MCF 10A (cell line): ENCODE measurements at regions of chr16 and their contacts with region 1.

Region 1: GRCh38 chr16:15757630-15758251 is 99.1 kb downstream of the MYH11 start:
- DNase-seq: no peak
- H3K4me3 Mint-ChIP-seq: no peak overlapping the region
- H3K27ac Mint-ChIP-seq: no peak overlapping the region
- H3K4me1 Mint-ChIP-seq: no peaks in the 10 kb centered on the region
- H3K27me3 Mint-ChIP-seq: peaks cover 27% of the 10 kb centered on the region
- CTCF ChIP-seq: no peak

Region 2: GRCh38 chr16:15427648-15428239 is 330.0 kb before region 1 on chr16:
- CTCF ChIA-PET with region 1: no interaction called
- POLR2A ChIA-PET with region 1: no interaction called
- intact Hi-C with region 1: loop called (anchors 5 kb)
- DNase-seq: peak; percentile 75
- H3K4me3 Mint-ChIP-seq: no peak overlapping the region
- H3K27ac Mint-ChIP-seq: no peak overlapping the region
- H3K4me1 Mint-ChIP-seq: no peaks in the 10 kb centered on the region
- H3K27me3 Mint-ChIP-seq: no peaks in the 10 kb centered on the region
- CTCF ChIP-seq: peak; percentile 49

Region 3: GRCh38 chr16:15672514-15673167 is 85.1 kb before region 1 on chr16:
- CTCF ChIA-PET with region 1: no interaction called
- POLR2A ChIA-PET with region 1: no interaction called
- intact Hi-C with region 1: no loop called
- DNase-seq: peak; percentile 99
- H3K4me3 Mint-ChIP-seq: peak overlapping the region; percentile 63
- H3K27ac Mint-ChIP-seq: peak overlapping the region; percentile 99
- H3K4me1 Mint-ChIP-seq: peaks cover 30% of the 10 kb centered on the region
- H3K27me3 Mint-ChIP-seq: no peaks in the 10 kb centered on the region
- CTCF ChIP-seq: no peak

Region 4: DNA sequence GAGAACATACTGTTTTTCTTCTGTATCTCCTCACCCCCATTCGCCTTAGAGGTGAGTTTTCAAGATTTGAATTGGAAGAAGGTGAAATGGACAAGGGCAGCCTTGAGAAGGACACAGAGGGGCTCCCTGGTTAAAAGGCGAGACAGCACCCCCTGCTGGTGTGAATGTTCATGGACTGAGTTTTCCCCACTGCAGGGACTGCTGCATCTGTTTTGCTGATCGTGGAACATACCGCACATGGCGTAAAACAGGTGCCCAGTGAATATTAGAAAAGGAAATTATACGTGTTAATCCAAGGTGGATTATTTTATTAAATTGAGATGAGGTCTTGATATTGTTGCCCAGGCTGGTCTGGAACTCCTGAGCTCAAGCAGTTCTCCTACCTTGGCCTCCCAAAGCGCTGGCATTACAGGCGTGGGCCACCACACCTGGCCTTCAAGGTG is 53.2 kb before region 1 on chr16:
- CTCF ChIA-PET with region 1: no interaction called
- POLR2A ChIA-PET with region 1: no interaction called
- intact Hi-C with region 1: no loop called
- DNase-seq: peak; percentile 73
- H3K4me3 Mint-ChIP-seq: no peak overlapping the region
- H3K27ac Mint-ChIP-seq: no peak overlapping the region
- H3K4me1 Mint-ChIP-seq: no peaks in the 10 kb centered on the region
- H3K27me3 Mint-ChIP-seq: no peaks in the 10 kb centered on the region
- CTCF ChIP-seq: peak; percentile 62

Region 5: DNA sequence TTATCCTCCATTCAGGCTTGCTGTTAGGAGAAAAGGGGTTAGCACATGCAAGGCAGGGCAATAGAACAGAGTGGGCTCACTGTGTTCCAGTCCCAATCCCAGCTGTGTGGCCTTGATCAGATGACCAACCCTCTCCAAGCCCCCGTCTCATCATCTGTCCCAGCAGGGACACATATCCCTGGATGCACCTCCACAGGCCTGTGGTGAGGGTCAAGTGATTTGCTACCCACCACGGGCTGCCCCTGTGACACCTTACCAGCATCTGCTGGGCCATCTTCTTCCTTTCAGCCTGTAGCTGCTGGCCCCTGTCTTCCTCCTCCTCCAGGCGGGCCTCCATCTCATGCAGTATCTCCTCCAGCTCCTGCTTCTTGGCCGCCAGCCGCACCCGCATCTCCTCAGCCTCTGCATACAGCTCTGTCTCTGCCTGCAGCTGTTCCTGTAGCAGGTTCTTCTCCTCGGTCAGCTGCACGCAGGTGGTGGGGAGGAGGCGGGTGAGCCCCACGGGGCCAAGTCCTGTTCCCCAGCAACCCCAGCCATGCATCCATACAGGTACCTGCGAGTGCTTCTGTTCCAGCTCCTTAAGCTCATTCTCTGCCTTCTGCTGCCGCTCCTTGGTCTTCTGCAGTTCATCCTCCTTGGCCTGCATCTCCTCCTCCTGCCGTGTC is 16.4 kb before region 1 on chr16:
- CTCF ChIA-PET with region 1: interaction called, 10 read pairs
- POLR2A ChIA-PET with region 1: interaction called, 4 read pairs
- intact Hi-C with region 1: no loop called
- DNase-seq: no peak
- H3K4me3 Mint-ChIP-seq: no peak overlapping the region
- H3K27ac Mint-ChIP-seq: no peak overlapping the region
- H3K4me1 Mint-ChIP-seq: no peaks in the 10 kb centered on the region
- H3K27me3 Mint-ChIP-seq: peaks cover 4% of the 10 kb centered on the region
- CTCF ChIP-seq: no peak